Activated CD4-positive, alpha-beta T cell treated with anti-CD3 and anti-CD28 coated beads for 36 hours (primary cell): ENCODE measurements at regions of chr4 and their contacts with region 1.

Region 1: GRCh38 chr4:177441803-177442622 is at the start of gene AGA:
- DNase-seq: peak; percentile 98
- ATAC-seq: peak; percentile 91
- H3K4me3 Mint-ChIP-seq: peak within 1 kb of the TSS; percentile 97
- H3K27ac Mint-ChIP-seq: peak within 1 kb of the TSS; percentile 100
- H3K4me1 Mint-ChIP-seq: peaks cover 24% of the 10 kb centered on the region
- H3K27me3 Mint-ChIP-seq: no peaks in the 10 kb centered on the region
- total RNA-seq, gene AGA: 20.8 to 27.7 TPM

Region 2: GRCh38 chr4:177309522-177310371 is 132.3 kb before region 1 on chr4 and contains the start of gene NEIL3:
- CTCF ChIA-PET with region 1: interaction called, 3 read pairs
- POLR2A ChIA-PET with region 1: interaction called, 9 read pairs
- intact Hi-C with region 1: loop called (anchors 1 to 2 kb)
- DNase-seq: peak; percentile 98
- ATAC-seq: peak; percentile 84
- H3K4me3 Mint-ChIP-seq: peak within 1 kb of the TSS; percentile 97
- H3K27ac Mint-ChIP-seq: peak within 1 kb of the TSS; percentile 84
- H3K4me1 Mint-ChIP-seq: peaks cover 27% of the 10 kb centered on the region
- H3K27me3 Mint-ChIP-seq: no peaks in the 10 kb centered on the region
- total RNA-seq, gene NEIL3: 18.1 to 18.6 TPM

Region 3: DNA sequence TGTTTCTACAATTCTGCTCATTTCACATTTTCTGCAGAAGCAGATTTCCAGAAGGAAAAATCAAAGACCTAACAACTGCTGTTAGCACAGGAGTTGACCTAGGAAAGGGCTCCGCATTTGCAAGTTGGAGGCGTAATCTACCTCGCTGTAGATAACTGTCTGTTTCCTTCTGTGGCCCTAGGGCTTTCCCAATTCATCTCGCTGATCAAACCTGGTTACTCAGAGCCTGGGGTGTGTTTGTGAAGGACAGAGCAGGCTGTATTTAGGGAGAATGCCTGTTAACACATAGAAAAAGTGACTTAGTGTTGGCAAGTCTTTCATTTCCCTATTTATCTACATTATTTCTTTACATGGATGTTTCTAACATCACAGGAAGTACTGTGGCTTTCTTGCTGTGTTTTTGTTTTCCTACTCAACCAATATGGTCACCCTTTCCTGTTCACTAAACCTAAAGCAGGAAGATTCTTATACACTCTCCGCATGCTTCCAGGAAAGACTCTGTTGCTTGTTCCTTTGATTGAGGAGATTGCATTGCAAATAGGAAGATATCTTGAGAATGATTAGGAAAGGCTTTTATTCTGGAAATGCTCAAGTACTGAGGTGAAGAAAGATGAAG is 40.2 kb before region 1 on chr4:
- CTCF ChIA-PET with region 1: interaction called, 3 read pairs
- POLR2A ChIA-PET with region 1: interaction called, 7 read pairs
- intact Hi-C with region 1: loop called (anchors 2 kb)
- DNase-seq: no peak
- ATAC-seq: no peak
- H3K4me3 Mint-ChIP-seq: no peak overlapping the region
- H3K27ac Mint-ChIP-seq: peak overlapping the region; percentile 26
- H3K4me1 Mint-ChIP-seq: peaks cover 38% of the 10 kb centered on the region
- H3K27me3 Mint-ChIP-seq: no peaks in the 10 kb centered on the region